B cell (primary cell): ENCODE measurements at regions of chr7 and their contacts with region 1.

Region 1: GRCh38 chr7:87886875-87887274 is 10.6 kb downstream of the DBF4 start:
- DNase-seq: peak; percentile 60
- ATAC-seq: no peak
- H3K4me3 ChIP-seq: no peak overlapping the region
- H3K4me3 Mint-ChIP-seq: no peak overlapping the region
- H3K27ac ChIP-seq: no peak overlapping the region
- H3K27ac Mint-ChIP-seq: no peak overlapping the region
- H3K4me1 ChIP-seq: no peaks in the 10 kb centered on the region
- H3K4me1 Mint-ChIP-seq: no peaks in the 10 kb centered on the region
- H3K27me3 ChIP-seq: no peaks in the 10 kb centered on the region
- H3K27me3 Mint-ChIP-seq: no peaks in the 10 kb centered on the region
- CTCF ChIP-seq: peak; percentile 78

Region 2: GRCh38 chr7:87312215-87312865 is 574.5 kb before region 1 on chr7:
- CTCF ChIA-PET with region 1: interaction called, 16 read pairs
- POLR2A ChIA-PET with region 1: no interaction called
- intact Hi-C with region 1: no loop called
- DNase-seq: peak; percentile 70
- ATAC-seq: peak; percentile 97
- H3K4me3 ChIP-seq: no peak overlapping the region
- H3K4me3 Mint-ChIP-seq: no peak overlapping the region
- H3K27ac ChIP-seq: no peak overlapping the region
- H3K27ac Mint-ChIP-seq: no peak overlapping the region
- H3K4me1 ChIP-seq: no peaks in the 10 kb centered on the region
- H3K4me1 Mint-ChIP-seq: no peaks in the 10 kb centered on the region
- H3K27me3 ChIP-seq: no peaks in the 10 kb centered on the region
- H3K27me3 Mint-ChIP-seq: no peaks in the 10 kb centered on the region
- CTCF ChIP-seq: peak; percentile 99

Region 3: GRCh38 chr7:87506246-87507180 is 380.4 kb before region 1 on chr7:
- CTCF ChIA-PET with region 1: interaction called, 26 read pairs
- POLR2A ChIA-PET with region 1: no interaction called
- intact Hi-C with region 1: loop called (anchors 1 kb)
- DNase-seq: peak; percentile 10
- ATAC-seq: peak; percentile 17
- H3K4me3 ChIP-seq: no peak overlapping the region
- H3K4me3 Mint-ChIP-seq: no peak overlapping the region
- H3K27ac ChIP-seq: peak overlapping the region in 1 of 2 donors; percentile 16
- H3K27ac Mint-ChIP-seq: peak overlapping the region; percentile 8
- H3K4me1 ChIP-seq: peaks cover 18 to 19% of the 10 kb centered on the region in 2 donors
- H3K4me1 Mint-ChIP-seq: peaks cover 29% of the 10 kb centered on the region
- H3K27me3 ChIP-seq: no peaks in the 10 kb centered on the region
- H3K27me3 Mint-ChIP-seq: no peaks in the 10 kb centered on the region
- CTCF ChIP-seq: peak; percentile 53

Region 4: DNA sequence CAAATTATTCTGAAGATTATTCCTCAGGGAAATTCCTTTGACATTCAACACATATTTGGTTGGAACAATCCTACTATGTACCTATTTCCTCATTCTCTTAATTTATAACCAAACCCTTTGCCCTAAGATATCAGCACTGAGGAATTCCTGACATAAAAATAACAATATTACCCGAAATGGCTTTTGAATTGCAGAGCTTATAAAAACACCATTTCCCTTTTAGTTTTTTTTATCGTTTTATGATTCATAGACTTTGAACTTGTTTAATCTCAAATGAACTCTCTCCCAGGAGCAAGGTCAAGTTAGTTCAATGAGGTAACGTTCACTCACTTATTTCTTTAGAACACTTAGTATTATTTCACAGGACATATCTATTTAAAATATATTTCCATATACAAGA is 278.4 kb before region 1 on chr7:
- CTCF ChIA-PET with region 1: no interaction called
- POLR2A ChIA-PET with region 1: no interaction called
- intact Hi-C with region 1: no loop called
- DNase-seq: no peak
- ATAC-seq: no peak
- H3K4me3 ChIP-seq: no peak overlapping the region
- H3K4me3 Mint-ChIP-seq: no peak overlapping the region
- H3K27ac ChIP-seq: no peak overlapping the region
- H3K27ac Mint-ChIP-seq: no peak overlapping the region
- H3K4me1 ChIP-seq: no peaks in the 10 kb centered on the region
- H3K4me1 Mint-ChIP-seq: no peaks in the 10 kb centered on the region
- H3K27me3 ChIP-seq: peaks cover 0 to 7% (median under 1%) of the 10 kb centered on the region in 4 experiments
- H3K27me3 Mint-ChIP-seq: peaks cover 39% of the 10 kb centered on the region
- CTCF ChIP-seq: no peak

Region 5: DNA sequence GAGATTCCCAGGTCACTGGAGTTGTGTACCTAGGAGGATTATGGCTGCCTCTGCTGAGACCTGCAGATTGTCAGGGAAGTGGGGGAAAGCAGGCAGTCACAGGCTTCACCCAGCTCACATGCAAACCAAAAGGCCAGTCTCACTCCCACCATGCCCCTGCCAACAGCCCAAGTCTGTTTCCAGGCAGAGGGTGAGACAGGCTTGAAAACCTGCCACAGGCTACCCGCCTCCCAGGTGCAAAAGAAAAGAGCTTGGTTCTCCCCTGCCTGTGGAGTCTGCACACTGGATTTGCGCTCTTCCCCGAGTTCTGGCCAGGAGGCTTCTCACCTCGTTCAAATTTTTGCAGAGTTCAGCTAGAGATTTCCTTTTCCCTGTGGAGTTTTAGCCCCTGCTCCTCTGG is 139.2 kb before region 1 on chr7:
- CTCF ChIA-PET with region 1: interaction called, 9 read pairs
- POLR2A ChIA-PET with region 1: no interaction called
- intact Hi-C with region 1: loop called (anchors 2 kb)
- DNase-seq: no peak
- ATAC-seq: no peak
- H3K4me3 ChIP-seq: no peak overlapping the region
- H3K4me3 Mint-ChIP-seq: no peak overlapping the region
- H3K27ac ChIP-seq: no peak overlapping the region
- H3K27ac Mint-ChIP-seq: no peak overlapping the region
- H3K4me1 ChIP-seq: no peaks in the 10 kb centered on the region
- H3K4me1 Mint-ChIP-seq: no peaks in the 10 kb centered on the region
- H3K27me3 ChIP-seq: no peaks in the 10 kb centered on the region
- H3K27me3 Mint-ChIP-seq: no peaks in the 10 kb centered on the region
- CTCF ChIP-seq: no peak

Region 6: DNA sequence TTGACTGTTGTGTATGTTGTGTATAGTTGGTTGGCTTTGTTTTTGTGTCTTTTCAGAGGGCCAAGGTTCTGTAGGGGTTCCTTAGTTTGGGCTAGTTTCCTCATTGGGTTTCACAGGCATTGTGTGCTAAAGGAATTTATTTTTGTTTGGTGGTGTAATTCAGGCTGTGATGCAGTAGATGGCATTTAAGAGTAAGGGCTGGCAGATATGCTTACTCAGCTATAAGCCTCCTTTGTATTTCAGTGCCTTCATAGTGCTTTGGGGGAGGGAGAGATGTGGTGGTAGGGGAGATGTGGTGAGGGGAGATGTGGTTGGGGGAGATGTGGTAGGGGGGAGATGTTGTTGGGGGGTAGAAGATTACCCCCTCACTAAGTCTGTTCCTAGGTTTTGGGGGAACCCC is 102.5 kb before region 1 on chr7:
- CTCF ChIA-PET with region 1: no interaction called
- POLR2A ChIA-PET with region 1: no interaction called
- intact Hi-C with region 1: no loop called
- DNase-seq: no peak
- ATAC-seq: no peak
- H3K4me3 ChIP-seq: no peak overlapping the region
- H3K4me3 Mint-ChIP-seq: no peak overlapping the region
- H3K27ac ChIP-seq: no peak overlapping the region
- H3K27ac Mint-ChIP-seq: no peak overlapping the region
- H3K4me1 ChIP-seq: no peaks in the 10 kb centered on the region
- H3K4me1 Mint-ChIP-seq: no peaks in the 10 kb centered on the region
- H3K27me3 ChIP-seq: no peaks in the 10 kb centered on the region
- H3K27me3 Mint-ChIP-seq: peaks cover 11% of the 10 kb centered on the region
- CTCF ChIP-seq: no peak

Region 7: DNA sequence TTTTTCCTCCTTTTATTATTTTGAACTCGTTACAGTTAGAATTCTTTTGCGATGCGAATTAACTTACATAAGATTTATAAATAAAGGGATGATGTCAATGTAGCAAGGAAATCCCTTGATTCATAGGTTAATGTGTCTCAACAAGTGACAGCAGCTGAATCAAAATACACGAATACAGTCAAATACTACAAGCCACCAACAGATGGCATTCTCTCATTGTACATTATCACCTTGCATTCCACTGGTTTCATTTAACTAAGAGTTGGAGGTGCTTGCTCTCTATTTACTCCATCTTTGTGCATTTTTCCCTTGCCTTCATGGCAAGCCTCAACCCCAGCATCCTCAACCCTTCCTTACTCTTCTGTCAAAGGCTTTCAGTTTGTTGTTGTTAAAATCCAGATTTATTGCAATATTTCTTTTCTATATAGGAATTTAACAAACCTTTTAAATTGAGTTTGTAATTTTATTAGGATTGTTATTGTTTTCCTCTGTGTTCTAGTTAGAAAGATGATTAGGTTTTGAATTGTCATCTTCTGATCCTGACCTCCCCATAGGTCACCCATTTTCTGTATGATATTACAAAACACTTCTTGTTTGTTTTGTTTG is 89.0 kb before region 1 on chr7:
- CTCF ChIA-PET with region 1: interaction called, 64 read pairs
- POLR2A ChIA-PET with region 1: no interaction called
- intact Hi-C with region 1: loop called (anchors 1 kb)
- DNase-seq: peak; percentile 56
- ATAC-seq: peak; percentile 69
- H3K4me3 ChIP-seq: no peak overlapping the region
- H3K4me3 Mint-ChIP-seq: no peak overlapping the region
- H3K27ac ChIP-seq: no peak overlapping the region
- H3K27ac Mint-ChIP-seq: no peak overlapping the region
- H3K4me1 ChIP-seq: no peaks in the 10 kb centered on the region
- H3K4me1 Mint-ChIP-seq: no peaks in the 10 kb centered on the region
- H3K27me3 ChIP-seq: no peaks in the 10 kb centered on the region
- H3K27me3 Mint-ChIP-seq: peaks cover 8% of the 10 kb centered on the region
- CTCF ChIP-seq: peak; percentile 73

Region 8: GRCh38 chr7:87833130-87833529 is 53.7 kb before region 1 on chr7:
- CTCF ChIA-PET with region 1: interaction called, 3 read pairs
- POLR2A ChIA-PET with region 1: no interaction called
- intact Hi-C with region 1: loop called (anchors 10 kb)
- DNase-seq: no peak
- ATAC-seq: no peak
- H3K4me3 ChIP-seq: no peak overlapping the region
- H3K4me3 Mint-ChIP-seq: no peak overlapping the region
- H3K27ac ChIP-seq: no peak overlapping the region
- H3K27ac Mint-ChIP-seq: no peak overlapping the region
- H3K4me1 ChIP-seq: no peaks in the 10 kb centered on the region
- H3K4me1 Mint-ChIP-seq: no peaks in the 10 kb centered on the region
- H3K27me3 ChIP-seq: no peaks in the 10 kb centered on the region
- H3K27me3 Mint-ChIP-seq: no peaks in the 10 kb centered on the region
- CTCF ChIP-seq: no peak

Region 9: DNA sequence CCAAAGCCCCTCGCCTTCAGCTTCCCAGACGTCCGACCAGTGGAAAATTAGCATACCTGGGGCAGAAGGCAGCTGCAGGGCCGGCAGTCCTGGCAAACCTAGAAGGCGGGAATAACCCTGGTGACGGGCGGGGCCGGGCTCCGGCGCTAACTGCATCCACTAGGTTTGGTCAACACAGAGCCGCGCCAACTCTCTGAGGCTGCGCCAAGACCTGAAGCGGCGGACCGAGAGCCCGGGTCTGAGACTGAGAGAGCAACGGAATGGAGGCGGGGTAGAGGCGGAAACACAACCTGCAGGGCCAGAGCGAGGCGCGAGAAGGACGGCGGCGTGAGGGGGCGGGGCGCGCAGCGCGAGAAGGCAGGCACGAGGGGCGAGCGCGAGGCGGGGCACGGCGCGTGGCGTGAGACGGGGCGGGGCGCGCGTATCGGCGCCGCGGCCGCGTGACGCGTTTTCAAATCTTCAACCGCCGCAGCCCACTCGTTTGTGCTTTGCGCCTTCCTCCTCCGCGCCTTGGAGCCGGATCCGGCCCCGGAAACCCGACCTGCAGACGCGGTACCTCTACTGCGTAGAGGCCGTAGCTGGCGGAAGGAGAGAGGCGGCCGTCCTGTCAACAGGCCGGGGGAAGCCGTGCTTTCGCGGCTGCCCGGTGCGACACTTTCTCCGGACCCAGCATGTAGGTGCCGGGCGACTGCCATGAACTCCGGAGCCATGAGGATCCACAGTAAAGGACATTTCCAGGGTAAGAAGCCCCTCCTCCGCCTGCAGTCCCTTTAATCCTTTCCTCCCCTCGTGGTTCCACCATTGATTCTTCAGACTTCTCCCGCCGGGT is 10.6 kb before region 1 on chr7 and contains the starts of genes DBF4 and SLC25A40:
- CTCF ChIA-PET with region 1: interaction called, 5 read pairs
- POLR2A ChIA-PET with region 1: no interaction called
- intact Hi-C with region 1: loop called (anchors 1 kb)
- DNase-seq: peak; percentile 98
- ATAC-seq: peak; percentile 92
- H3K4me3 ChIP-seq: peak within 1 kb of the TSS; percentile 73 to 98 (median 93)
- H3K4me3 Mint-ChIP-seq: peak within 1 kb of the TSS; percentile 76
- H3K27ac ChIP-seq: peak within 1 kb of the TSS; percentile 83 to 93
- H3K27ac Mint-ChIP-seq: peak within 1 kb of the TSS; percentile 98
- H3K4me1 ChIP-seq: peaks cover 18 to 24% of the 10 kb centered on the region in 2 donors
- H3K4me1 Mint-ChIP-seq: peaks cover 37% of the 10 kb centered on the region
- H3K27me3 ChIP-seq: no peaks in the 10 kb centered on the region
- H3K27me3 Mint-ChIP-seq: no peaks in the 10 kb centered on the region
- CTCF ChIP-seq: no peak
- total RNA-seq, gene DBF4: 21.0 and 27.6 TPM in 2 replicates
- total RNA-seq, gene SLC25A40: 28.1 and 34.5 TPM in 2 replicates